WTC11 (cell line): ENCODE measurements at regions of chr17 and their contacts with region 1.

Region 1: DNA sequence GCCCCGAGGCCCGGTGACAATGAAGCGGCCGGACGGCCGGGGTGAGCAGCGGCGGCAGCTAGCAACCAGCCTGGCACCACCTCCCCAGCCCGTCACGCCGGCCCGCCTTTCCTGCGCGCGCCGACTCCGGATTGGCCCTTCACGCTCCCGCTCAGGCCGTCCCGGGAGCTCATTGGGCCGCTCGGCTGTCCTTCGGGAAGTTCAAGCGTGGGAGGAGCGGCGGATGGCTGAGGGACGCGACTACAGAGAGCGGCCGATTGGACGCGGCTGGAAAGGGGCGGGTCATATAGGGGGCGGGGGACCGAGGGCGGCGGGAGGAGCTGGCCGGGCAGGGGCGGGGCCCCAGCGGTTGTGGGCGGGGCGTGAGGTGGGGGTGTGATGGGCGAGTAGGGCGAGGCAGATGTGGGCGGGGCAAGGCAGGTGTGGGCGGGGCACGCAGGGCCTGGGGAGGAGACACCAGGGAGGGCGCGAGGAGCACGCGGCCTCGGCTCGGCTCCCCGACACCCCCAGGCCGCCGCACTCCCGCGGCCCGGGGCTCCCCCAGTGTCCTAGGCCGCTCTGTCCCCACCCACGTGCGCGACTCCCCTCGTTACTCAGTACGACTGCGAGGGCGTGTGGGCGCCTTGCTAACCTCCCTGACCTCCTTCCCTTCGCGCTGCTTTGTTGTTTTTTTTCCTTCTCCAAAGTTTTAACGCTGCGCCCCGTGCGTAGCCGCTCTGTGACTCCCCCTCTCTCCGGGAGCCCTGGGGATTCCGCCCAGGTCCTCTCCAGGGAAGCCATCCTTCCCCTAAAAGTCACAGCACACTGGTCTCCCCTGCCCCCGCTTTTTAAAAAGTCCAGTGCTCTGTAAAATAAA is at the start of gene CEP131:
- DNase-seq: peak; percentile 100
- ATAC-seq: peak; percentile 96
- H3K4me3 Mint-ChIP-seq: peak within 1 kb of the TSS; percentile 76
- H3K27ac Mint-ChIP-seq: peak within 1 kb of the TSS; percentile 23; the same call in 1 of the 2 replicates
- H3K4me1 Mint-ChIP-seq: peaks cover 17% of the 10 kb centered on the region
- H3K27me3 Mint-ChIP-seq: peaks cover 20% of the 10 kb centered on the region
- CTCF ChIP-seq: no peak
- total RNA-seq, gene CEP131: 32.4 to 35.2 TPM (median 34.3 TPM) in 3 replicates

Region 2: GRCh38 chr17:80364216-80364618 is 858.9 kb before region 1 on chr17:
- CTCF ChIA-PET with region 1: no interaction called
- POLR2A ChIA-PET with region 1: no interaction called
- DNase-seq: peak; percentile 68
- ATAC-seq: peak; percentile 60
- H3K4me3 Mint-ChIP-seq: no peak overlapping the region
- H3K27ac Mint-ChIP-seq: no peak overlapping the region
- H3K4me1 Mint-ChIP-seq: no peaks in the 10 kb centered on the region
- H3K27me3 Mint-ChIP-seq: no peaks in the 10 kb centered on the region
- CTCF ChIP-seq: peak; percentile 21; the same call in 1 of the 2 replicates

Region 3: GRCh38 chr17:81136366-81136765 is 86.8 kb before region 1 on chr17:
- CTCF ChIA-PET with region 1: no interaction called
- POLR2A ChIA-PET with region 1: no interaction called
- DNase-seq: no peak
- ATAC-seq: no peak
- H3K4me3 Mint-ChIP-seq: no peak overlapping the region
- H3K27ac Mint-ChIP-seq: no peak overlapping the region
- H3K4me1 Mint-ChIP-seq: no peaks in the 10 kb centered on the region
- H3K27me3 Mint-ChIP-seq: no peaks in the 10 kb centered on the region
- CTCF ChIP-seq: no peak

Region 4: GRCh38 chr17:81238817-81239600 is 15.9 kb after region 1 on chr17 and contains the starts of genes NDUFAF8 and TEPSIN:
- CTCF ChIA-PET with region 1: interaction called, 14 read pairs
- POLR2A ChIA-PET with region 1: interaction called, 9 read pairs
- DNase-seq: peak; percentile 95
- ATAC-seq: peak; percentile 97
- H3K4me3 Mint-ChIP-seq: peak within 1 kb of the TSS; percentile 90
- H3K27ac Mint-ChIP-seq: peak within 1 kb of the TSS; percentile 76
- H3K4me1 Mint-ChIP-seq: peaks cover 27% of the 10 kb centered on the region
- H3K27me3 Mint-ChIP-seq: no peaks in the 10 kb centered on the region
- CTCF ChIP-seq: no peak
- total RNA-seq, gene NDUFAF8: 58.6 to 73.0 TPM (median 59.9 TPM) in 3 replicates
- total RNA-seq, gene TEPSIN: 32.2 to 40.7 TPM (median 35.4 TPM) in 3 replicates

Region 5: DNA sequence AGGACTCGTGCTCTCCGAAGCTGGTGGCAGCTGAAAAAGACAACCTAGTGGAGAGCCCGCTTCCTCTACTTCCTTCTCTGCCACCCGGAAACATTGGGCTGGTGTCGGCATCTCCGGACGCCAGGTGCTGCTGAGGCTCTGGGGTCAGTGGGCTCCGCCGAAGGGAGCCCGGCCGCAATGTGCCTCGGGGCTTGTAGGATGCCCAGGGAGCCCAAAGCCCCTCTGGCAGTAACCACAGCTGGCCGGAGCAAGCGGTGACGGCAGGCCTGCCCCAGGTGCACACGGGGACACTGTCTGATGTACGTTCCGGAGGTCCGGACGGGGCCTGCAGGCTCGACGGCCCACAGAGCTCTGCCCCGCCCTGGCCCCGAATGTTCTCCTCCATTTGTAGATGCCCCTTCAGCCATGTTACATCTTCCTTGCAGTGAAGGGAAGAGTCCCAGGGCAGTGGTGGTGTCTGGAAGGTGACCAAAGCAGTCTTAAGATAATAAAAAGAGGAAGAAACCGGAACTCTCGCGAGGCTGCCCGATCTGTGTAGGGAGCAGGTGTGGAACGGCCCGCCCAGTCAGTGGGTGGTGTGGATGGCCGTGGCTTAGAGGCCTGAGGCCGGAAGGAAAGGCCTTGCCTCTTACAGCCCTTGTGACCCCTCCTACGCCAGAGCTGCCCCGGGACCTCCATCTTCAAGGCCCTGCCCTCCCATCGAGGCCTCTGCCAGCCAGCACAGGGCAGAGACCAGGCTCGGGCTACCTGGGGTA is 38.6 kb after region 1 on chr17:
- CTCF ChIA-PET with region 1: no interaction called
- POLR2A ChIA-PET with region 1: no interaction called
- DNase-seq: no peak
- ATAC-seq: no peak
- H3K4me3 Mint-ChIP-seq: no peak overlapping the region
- H3K27ac Mint-ChIP-seq: no peak overlapping the region
- H3K4me1 Mint-ChIP-seq: no peaks in the 10 kb centered on the region
- H3K27me3 Mint-ChIP-seq: no peaks in the 10 kb centered on the region
- CTCF ChIP-seq: no peak